ENCODE measurements at regions of chr11 and their contacts with region 1.

Region 1: DNA sequence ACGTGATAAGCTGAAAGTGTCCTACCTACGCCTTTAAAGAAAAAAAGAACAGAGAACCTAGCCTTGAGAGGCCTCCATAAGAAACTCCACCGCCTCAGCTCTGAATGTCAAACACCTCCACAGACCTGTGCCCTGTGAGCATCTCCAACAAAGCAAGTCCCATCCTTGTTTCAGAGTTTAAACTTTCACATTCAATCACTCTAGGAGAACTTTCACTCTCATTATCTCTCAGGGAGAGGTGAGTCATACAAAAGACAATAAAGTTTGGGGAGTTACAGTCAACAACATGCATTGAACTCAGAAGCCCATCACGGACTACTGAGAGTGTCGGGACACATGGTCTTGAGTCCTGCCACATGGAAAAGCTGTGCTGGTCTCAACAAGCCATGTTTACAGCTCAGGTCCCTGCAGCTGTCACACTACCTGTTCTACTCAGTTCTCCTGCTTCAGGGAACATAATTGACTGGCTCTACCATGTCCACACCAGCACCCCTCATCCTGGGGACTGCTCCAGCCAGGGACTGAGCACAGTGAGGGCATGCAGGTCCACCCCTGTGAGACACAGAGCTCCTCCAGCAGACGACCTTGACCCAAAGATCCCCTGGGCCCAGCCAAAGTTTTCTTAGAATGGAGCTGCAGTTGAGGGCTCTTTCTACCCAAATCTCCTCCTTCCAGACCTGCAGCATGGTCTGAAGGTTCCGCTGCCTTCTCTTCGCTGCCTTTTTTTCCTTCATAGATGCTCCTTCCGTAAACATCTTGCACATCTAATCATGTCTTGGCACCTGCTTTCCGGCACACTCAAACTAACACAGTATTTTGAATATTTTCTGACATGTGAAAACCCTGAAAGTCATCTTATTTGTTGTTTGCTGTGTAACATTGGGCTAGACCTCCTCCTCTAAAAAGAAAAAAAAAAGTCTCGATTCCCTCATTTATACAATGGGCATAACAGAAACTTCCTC is 114.9 kb downstream of the ETS1 start:
- DNase-seq: peak in 5 of 9 donors; percentile 38 to 77 (median 57)
- ATAC-seq: peak; percentile 17
- H3K4me3 ChIP-seq: peak overlapping the region; percentile 63
- H3K4me3 Mint-ChIP-seq: peak overlapping the region; percentile 73 to 99 (median 82)
- H3K27ac ChIP-seq: peak overlapping the region; percentile 97
- H3K27ac Mint-ChIP-seq: peak overlapping the region; percentile 92 to 100 (median 98)
- H3K4me1 ChIP-seq: peaks cover 98 to 100% of the 10 kb centered on the region in 2 donors
- H3K4me1 Mint-ChIP-seq: peaks cover 76 to 100% (median 98%) of the 10 kb centered on the region in 7 donors
- H3K27me3 ChIP-seq: no peaks in the 10 kb centered on the region
- H3K27me3 Mint-ChIP-seq: no peaks in the 10 kb centered on the region

Region 2: DNA sequence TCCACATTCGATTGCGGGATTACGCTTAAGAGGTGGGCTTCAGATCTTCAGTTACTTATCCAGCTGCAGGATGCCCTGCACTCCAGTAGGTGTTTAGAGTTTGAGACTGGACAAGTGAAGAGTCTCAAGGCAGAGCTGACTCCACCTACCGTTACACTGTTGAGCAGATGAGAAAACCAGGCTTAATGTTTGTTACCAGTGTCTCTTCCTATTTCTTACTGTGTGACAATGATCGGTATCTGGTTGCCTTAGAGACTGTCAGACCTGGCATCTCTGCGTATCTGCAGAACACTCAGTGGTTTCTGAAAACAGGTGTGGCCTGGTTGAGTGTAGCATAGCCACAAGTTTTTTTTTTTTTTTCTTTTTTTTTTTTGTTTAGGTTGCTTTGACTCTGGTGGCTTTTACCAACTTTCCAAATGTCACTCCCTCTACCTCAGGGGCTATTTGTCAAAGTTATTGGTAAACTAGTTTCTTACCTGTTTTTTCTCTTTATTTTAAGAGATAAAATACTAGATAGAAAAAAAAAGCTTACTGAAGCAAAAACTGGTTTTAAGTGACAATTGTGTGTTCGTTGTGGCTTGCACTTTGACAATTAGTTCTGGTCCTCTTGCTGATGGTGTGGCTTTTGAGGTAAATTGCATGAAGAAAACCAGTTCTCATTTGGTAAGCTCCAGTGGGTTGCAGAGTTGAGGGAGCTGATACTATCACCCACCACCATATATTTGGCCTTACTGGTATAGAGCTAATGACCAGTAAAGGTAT is 169.8 kb before region 1 on chr11:
- CTCF ChIA-PET with region 1: interaction called, 7 read pairs
- POLR2A ChIA-PET with region 1: interaction called, 355 read pairs
- intact Hi-C with region 1: loop called (anchors 1 kb)
- DNase-seq: peak; percentile 39 to 97 (median 92)
- ATAC-seq: peak; percentile 92
- H3K4me3 ChIP-seq: peak overlapping the region; percentile 52
- H3K4me3 Mint-ChIP-seq: peak overlapping the region; percentile 81 to 98 (median 93)
- H3K27ac ChIP-seq: peak overlapping the region; percentile 98
- H3K27ac Mint-ChIP-seq: peak overlapping the region; percentile 93 to 100 (median 98)
- H3K4me1 ChIP-seq: peaks cover 83 to 95% of the 10 kb centered on the region in 2 donors
- H3K4me1 Mint-ChIP-seq: peaks cover 52 to 92% (median 88%) of the 10 kb centered on the region in 7 donors
- H3K27me3 ChIP-seq: no peaks in the 10 kb centered on the region
- H3K27me3 Mint-ChIP-seq: no peaks in the 10 kb centered on the region

Region 3: GRCh38 chr11:128342511-128343134 is 129.8 kb before region 1 on chr11:
- CTCF ChIA-PET with region 1: interaction called, 5 read pairs
- POLR2A ChIA-PET with region 1: interaction called, 19 read pairs
- intact Hi-C with region 1: loop called in 1 of 2 experiments (anchors 2 kb)
- DNase-seq: peak in 5 of 9 donors; percentile 46 to 77 (median 63)
- ATAC-seq: peak; percentile 54
- H3K4me3 ChIP-seq: peak overlapping the region; percentile 57
- H3K4me3 Mint-ChIP-seq: peak overlapping the region; percentile 74 to 90 (median 84)
- H3K27ac ChIP-seq: peak overlapping the region; percentile 93
- H3K27ac Mint-ChIP-seq: peak overlapping the region; percentile 97 to 99 (median 99)
- H3K4me1 ChIP-seq: peaks cover 50 to 64% of the 10 kb centered on the region in 2 donors
- H3K4me1 Mint-ChIP-seq: peaks cover 52 to 99% (median 94%) of the 10 kb centered on the region in 7 donors
- H3K27me3 ChIP-seq: no peaks in the 10 kb centered on the region
- H3K27me3 Mint-ChIP-seq: no peaks in the 10 kb centered on the region

Region 4: GRCh38 chr11:128482512-128483191 is 10.2 kb after region 1 on chr11:
- CTCF ChIA-PET with region 1: interaction called, 7 read pairs
- POLR2A ChIA-PET with region 1: interaction called, 278 read pairs
- intact Hi-C with region 1: loop called in 1 of 2 experiments (anchors 1 kb)
- DNase-seq: peak in 6 of 9 donors; percentile 62 to 86 (median 68)
- ATAC-seq: peak; percentile 74
- H3K4me3 ChIP-seq: peak overlapping the region; percentile 47
- H3K4me3 Mint-ChIP-seq: peak overlapping the region; percentile 73 to 99 (median 82)
- H3K27ac ChIP-seq: peak overlapping the region; percentile 97
- H3K27ac Mint-ChIP-seq: peak overlapping the region; percentile 92 to 99 (median 98)
- H3K4me1 ChIP-seq: peaks cover 89 to 95% of the 10 kb centered on the region in 2 donors
- H3K4me1 Mint-ChIP-seq: peaks cover 82 to 100% (median 99%) of the 10 kb centered on the region in 7 donors
- H3K27me3 ChIP-seq: no peaks in the 10 kb centered on the region
- H3K27me3 Mint-ChIP-seq: no peaks in the 10 kb centered on the region

Region 5: GRCh38 chr11:128497061-128497775 is 24.8 kb after region 1 on chr11:
- CTCF ChIA-PET with region 1: interaction called, 6 read pairs
- POLR2A ChIA-PET with region 1: interaction called, 560 read pairs
- intact Hi-C with region 1: loop called in 1 of 2 experiments (anchors 1 kb)
- DNase-seq: no peak
- ATAC-seq: peak; percentile 32
- H3K4me3 ChIP-seq: peak overlapping the region; percentile 36
- H3K4me3 Mint-ChIP-seq: peak overlapping the region; percentile 81 to 100 (median 94)
- H3K27ac ChIP-seq: peak overlapping the region; percentile 97
- H3K27ac Mint-ChIP-seq: peak overlapping the region; percentile 89 to 99 (median 95)
- H3K4me1 ChIP-seq: peaks cover 90 to 95% of the 10 kb centered on the region in 2 donors
- H3K4me1 Mint-ChIP-seq: peaks cover 83 to 100% (median 97%) of the 10 kb centered on the region in 7 donors
- H3K27me3 ChIP-seq: no peaks in the 10 kb centered on the region
- H3K27me3 Mint-ChIP-seq: no peaks in the 10 kb centered on the region

Region 6: DNA sequence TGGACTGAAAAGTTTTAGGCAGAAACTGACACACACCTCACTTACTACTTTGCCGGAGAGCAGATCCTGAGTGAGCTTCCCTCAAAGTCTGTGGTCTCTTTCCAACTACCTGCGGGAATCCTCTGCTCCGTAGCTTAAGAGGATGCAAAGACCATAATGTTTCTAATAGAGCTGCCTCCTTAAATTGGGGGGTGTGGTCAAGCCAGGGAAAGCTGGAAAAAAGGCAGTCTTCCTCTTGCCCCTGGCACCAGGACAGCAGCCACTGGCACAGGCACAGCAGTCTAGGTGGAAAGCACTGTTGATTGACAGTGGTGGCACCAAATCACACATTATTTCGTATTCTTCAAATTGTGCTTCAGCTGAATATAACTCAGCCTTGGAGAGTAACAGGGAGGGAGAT is 115.0 kb after region 1 on chr11 and contains the start of gene ETS1:
- CTCF ChIA-PET with region 1: no interaction called
- POLR2A ChIA-PET with region 1: no interaction called
- intact Hi-C with region 1: no loop called
- DNase-seq: no peak
- ATAC-seq: no peak
- H3K4me3 ChIP-seq: no peak within 1 kb of the TSS
- H3K4me3 Mint-ChIP-seq: no peak within 1 kb of the TSS
- H3K27ac ChIP-seq: no peak within 1 kb of the TSS
- H3K27ac Mint-ChIP-seq: no peak within 1 kb of the TSS
- H3K4me1 ChIP-seq: no peaks in the 10 kb centered on the region
- H3K4me1 Mint-ChIP-seq: peaks cover 21 to 39% (median 29%) of the 10 kb centered on the region in 7 donors
- H3K27me3 ChIP-seq: no peaks in the 10 kb centered on the region
- H3K27me3 Mint-ChIP-seq: peaks cover 0 to 47% (median 0%) of the 10 kb centered on the region in 5 donors
- total RNA-seq, gene ETS1: 659 to 871 (median 773) TPM

Region 7: GRCh38 chr11:128624269-128625175 is 152.1 kb after region 1 on chr11:
- CTCF ChIA-PET with region 1: interaction called, 8 read pairs
- POLR2A ChIA-PET with region 1: interaction called, 43 read pairs
- intact Hi-C with region 1: no loop called
- DNase-seq: peak; percentile 40 to 78 (median 66)
- ATAC-seq: peak; percentile 79
- H3K4me3 ChIP-seq: peak overlapping the region; percentile 32
- H3K4me3 Mint-ChIP-seq: peak overlapping the region; percentile 74 to 89 (median 82)
- H3K27ac ChIP-seq: peak overlapping the region; percentile 73
- H3K27ac Mint-ChIP-seq: peak overlapping the region; percentile 95 to 100 (median 98)
- H3K4me1 ChIP-seq: peaks cover 52 to 84% of the 10 kb centered on the region in 2 donors
- H3K4me1 Mint-ChIP-seq: peaks cover 82 to 100% (median 99%) of the 10 kb centered on the region in 7 donors
- H3K27me3 ChIP-seq: no peaks in the 10 kb centered on the region
- H3K27me3 Mint-ChIP-seq: no peaks in the 10 kb centered on the region

Region 8: DNA sequence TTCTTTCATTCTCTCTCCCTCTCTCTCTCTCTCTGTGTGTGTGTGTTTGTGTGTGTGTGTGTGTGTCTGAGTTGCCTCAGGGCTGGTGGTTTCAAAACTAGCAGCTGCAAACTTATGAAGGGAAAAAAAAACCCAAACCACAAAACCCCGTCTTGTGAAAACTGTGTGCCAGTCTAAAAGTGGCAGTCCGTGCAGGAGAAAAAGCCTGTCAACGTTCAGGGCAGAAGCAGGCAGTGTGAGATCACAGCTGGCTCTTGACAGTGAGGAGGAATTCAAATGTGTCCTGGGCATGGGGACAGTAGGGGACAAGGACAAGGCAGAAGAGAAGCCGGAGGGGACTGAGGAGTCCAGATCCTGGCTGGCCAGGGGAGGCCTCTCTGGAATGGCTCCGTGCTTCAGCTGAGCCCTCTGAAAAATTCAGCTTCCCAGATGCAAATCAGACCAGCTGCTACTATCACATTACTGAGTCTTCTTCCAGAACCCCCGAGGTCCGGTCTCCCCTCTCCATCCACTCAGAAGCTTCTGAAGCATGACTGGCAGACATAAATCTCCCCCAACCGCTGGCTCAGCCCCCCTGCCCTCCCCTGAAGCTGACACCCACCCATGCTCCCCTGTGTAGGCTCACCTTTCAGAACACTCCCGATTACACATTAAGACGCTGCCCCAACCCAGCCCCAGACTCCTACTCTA is 253.4 kb after region 1 on chr11:
- CTCF ChIA-PET with region 1: no interaction called
- POLR2A ChIA-PET with region 1: interaction called, 3 read pairs
- intact Hi-C with region 1: loop called in 1 of 2 experiments (anchors 5 kb)
- DNase-seq: peak; percentile 32 to 90 (median 86)
- ATAC-seq: peak; percentile 76
- H3K4me3 ChIP-seq: peak overlapping the region; percentile 62
- H3K4me3 Mint-ChIP-seq: peak overlapping the region; percentile 70 to 96 (median 86)
- H3K27ac ChIP-seq: peak overlapping the region; percentile 65
- H3K27ac Mint-ChIP-seq: peak overlapping the region; percentile 71 to 98 (median 92)
- H3K4me1 ChIP-seq: peaks cover 96 to 99% of the 10 kb centered on the region in 2 donors
- H3K4me1 Mint-ChIP-seq: peaks cover 90 to 100% (median 97%) of the 10 kb centered on the region in 7 donors
- H3K27me3 ChIP-seq: no peaks in the 10 kb centered on the region
- H3K27me3 Mint-ChIP-seq: no peaks in the 10 kb centered on the region

Measured in naive thymus-derived CD4-positive, alpha-beta T cell (primary cell).